ENCODE measurements at regions of chr10 and their contacts with region 1.

Region 1: DNA sequence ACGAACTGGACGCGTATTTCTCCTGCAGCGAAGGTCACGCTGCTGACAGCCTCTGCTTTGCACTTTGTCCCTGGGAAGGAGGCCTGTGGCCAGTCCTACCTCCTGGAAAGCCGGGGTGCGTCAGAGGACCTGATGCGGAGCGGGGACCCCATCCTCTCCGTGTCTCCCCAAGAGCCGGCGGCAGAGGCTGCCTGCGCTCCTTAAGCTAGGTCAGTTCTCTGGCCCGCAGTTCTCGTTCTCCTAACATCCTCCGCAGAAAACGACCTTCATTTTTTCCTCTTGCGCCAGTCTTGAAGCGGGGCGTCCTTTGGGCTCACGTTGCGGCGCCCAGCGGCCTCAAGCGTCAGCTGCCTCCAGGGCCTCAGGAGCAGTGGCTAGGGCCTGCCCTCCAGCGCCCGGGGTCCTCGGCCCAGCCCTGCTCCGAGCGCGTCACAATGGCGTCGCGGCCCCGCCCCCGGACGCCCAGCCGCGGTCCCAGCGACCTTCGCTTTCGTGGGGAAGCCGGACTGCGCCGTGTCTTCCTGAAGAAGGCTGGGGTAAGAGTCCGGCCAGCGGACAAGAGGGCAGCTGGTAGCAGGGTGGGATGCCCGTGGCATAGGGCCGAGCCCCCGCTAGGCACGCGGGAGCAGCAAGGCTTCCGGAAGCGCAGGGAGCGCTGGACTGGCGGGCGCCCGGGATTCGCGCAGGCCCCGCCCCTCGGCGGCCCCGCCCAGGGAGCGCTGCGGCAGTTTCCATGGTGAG is at the start of gene ZNF487:
- DNase-seq: peak; percentile 94
- H3K4me3 Mint-ChIP-seq: peak within 1 kb of the TSS; percentile 83
- H3K27ac Mint-ChIP-seq: peak within 1 kb of the TSS; percentile 92
- H3K4me1 Mint-ChIP-seq: peaks cover 14% of the 10 kb centered on the region
- H3K27me3 Mint-ChIP-seq: no peaks in the 10 kb centered on the region
- total RNA-seq, gene ZNF487: 2.2 to 2.6 TPM

Region 2: DNA sequence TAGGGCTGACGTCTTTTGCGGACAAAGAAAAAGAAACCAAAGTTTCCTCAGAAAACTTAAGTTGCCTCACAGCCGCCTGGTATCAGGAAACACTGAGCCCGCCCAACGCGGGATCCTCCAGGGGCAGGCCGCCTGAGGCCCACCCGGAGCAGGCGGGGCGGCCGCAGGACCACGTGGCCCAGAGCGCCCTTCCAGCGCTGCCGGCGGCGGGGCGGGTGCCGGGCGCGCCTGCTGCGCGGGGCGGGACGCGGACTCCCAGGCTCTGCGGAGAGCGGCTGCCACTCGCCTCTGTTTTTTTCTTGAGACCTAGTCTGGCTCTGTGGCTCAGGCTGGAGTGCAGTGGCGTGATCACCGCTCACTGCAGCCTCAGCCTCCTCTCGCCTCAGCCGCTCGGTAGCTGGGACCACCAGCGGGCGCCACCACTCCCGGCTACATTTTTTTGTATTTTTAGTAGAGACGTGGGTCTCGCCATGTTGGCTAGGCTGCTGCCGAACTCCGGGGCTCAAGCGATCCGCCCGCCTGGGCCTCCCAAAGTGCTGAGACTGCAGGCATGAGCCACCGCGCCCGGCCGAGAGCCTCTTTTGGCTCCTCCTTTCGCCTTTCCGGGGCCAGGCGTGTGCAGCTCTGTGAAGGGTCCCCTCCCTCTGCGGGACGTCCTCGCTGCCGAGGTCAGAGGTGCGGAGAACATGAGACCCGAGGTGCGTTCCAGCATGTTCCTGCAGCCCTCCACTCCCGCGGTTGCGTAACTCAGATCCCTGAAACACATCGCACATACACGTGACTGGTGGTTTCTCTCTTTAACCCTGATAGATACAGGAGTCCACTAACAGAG is 16.0 kb before region 1 on chr10:
- CTCF ChIA-PET with region 1: interaction called, 3 read pairs
- POLR2A ChIA-PET with region 1: interaction called, 28 read pairs
- intact Hi-C with region 1: loop called (anchors 1 kb)
- DNase-seq: peak; percentile 91
- H3K4me3 Mint-ChIP-seq: peak overlapping the region; percentile 80
- H3K27ac Mint-ChIP-seq: peak overlapping the region; percentile 98
- H3K4me1 Mint-ChIP-seq: peaks cover 41% of the 10 kb centered on the region
- H3K27me3 Mint-ChIP-seq: no peaks in the 10 kb centered on the region

Region 3: GRCh38 chr10:43491855-43492254 is 55.3 kb after region 1 on chr10:
- CTCF ChIA-PET with region 1: no interaction called
- POLR2A ChIA-PET with region 1: no interaction called
- intact Hi-C with region 1: no loop called
- DNase-seq: no peak
- H3K4me3 Mint-ChIP-seq: no peak overlapping the region
- H3K27ac Mint-ChIP-seq: no peak overlapping the region
- H3K4me1 Mint-ChIP-seq: no peaks in the 10 kb centered on the region
- H3K27me3 Mint-ChIP-seq: no peaks in the 10 kb centered on the region

Region 4: GRCh38 chr10:43502931-43503330 is 66.4 kb after region 1 on chr10:
- CTCF ChIA-PET with region 1: no interaction called
- POLR2A ChIA-PET with region 1: no interaction called
- intact Hi-C with region 1: no loop called
- DNase-seq: no peak
- H3K4me3 Mint-ChIP-seq: no peak overlapping the region
- H3K27ac Mint-ChIP-seq: no peak overlapping the region
- H3K4me1 Mint-ChIP-seq: no peaks in the 10 kb centered on the region
- H3K27me3 Mint-ChIP-seq: no peaks in the 10 kb centered on the region